ENCODE measurements at regions of chr9 and their contacts with region 1.

Region 1: GRCh38 chr9:5450359-5451091 is at the start of gene CD274:
- DNase-seq: peak; percentile 88
- ATAC-seq: peak; percentile 95
- H3K4me3 Mint-ChIP-seq: peak within 1 kb of the TSS; percentile 92
- H3K27ac Mint-ChIP-seq: peak within 1 kb of the TSS; percentile 95
- H3K4me1 Mint-ChIP-seq: peaks cover 56% of the 10 kb centered on the region
- H3K27me3 Mint-ChIP-seq: no peaks in the 10 kb centered on the region
- total RNA-seq, gene CD274: 6.8 to 9.8 TPM

Region 2: DNA sequence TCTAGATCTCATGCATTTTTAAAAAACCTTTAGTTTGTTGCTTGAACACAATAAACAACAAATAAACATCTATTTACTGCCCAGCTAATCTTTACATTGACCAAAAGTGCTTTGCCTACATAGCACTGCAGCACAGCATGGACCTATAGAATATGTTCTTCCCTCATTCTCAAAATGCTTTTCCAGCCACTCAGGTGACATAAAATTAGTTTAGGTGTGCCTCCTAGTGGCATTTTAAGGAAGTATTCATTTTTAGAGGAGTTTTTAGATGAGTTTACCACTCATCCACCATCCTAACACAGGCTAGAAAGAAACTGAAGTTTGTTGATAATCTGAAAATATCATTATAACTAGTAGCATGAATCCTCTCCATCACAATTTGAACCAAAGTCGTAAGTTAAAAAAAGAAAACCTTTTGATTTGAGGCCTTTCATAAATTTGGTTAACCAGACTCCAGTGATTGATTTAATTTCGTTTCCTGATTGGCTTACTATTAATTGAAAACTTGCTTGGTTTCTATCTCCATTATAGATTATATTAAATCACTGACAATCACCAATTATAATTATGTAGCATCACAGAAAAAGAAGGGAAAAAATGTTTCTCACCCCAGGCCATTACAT is 25.4 kb before region 1 on chr9:
- POLR2A ChIA-PET with region 1: no interaction called
- DNase-seq: no peak
- ATAC-seq: peak; percentile 58
- H3K4me3 Mint-ChIP-seq: no peak overlapping the region
- H3K27ac Mint-ChIP-seq: no peak overlapping the region
- H3K4me1 Mint-ChIP-seq: peaks cover 12% of the 10 kb centered on the region
- H3K27me3 Mint-ChIP-seq: no peaks in the 10 kb centered on the region

Region 3: GRCh38 chr9:5437254-5438216 is 13.0 kb before region 1 on chr9 and contains the start of gene PLGRKT:
- POLR2A ChIA-PET with region 1: interaction called, 29 read pairs
- DNase-seq: peak; percentile 88
- ATAC-seq: peak; percentile 98
- H3K4me3 Mint-ChIP-seq: peak within 1 kb of the TSS; percentile 94
- H3K27ac Mint-ChIP-seq: peak within 1 kb of the TSS; percentile 93
- H3K4me1 Mint-ChIP-seq: peaks cover 20% of the 10 kb centered on the region
- H3K27me3 Mint-ChIP-seq: no peaks in the 10 kb centered on the region
- total RNA-seq, gene PLGRKT: 25.5 to 27.0 TPM

Region 4: DNA sequence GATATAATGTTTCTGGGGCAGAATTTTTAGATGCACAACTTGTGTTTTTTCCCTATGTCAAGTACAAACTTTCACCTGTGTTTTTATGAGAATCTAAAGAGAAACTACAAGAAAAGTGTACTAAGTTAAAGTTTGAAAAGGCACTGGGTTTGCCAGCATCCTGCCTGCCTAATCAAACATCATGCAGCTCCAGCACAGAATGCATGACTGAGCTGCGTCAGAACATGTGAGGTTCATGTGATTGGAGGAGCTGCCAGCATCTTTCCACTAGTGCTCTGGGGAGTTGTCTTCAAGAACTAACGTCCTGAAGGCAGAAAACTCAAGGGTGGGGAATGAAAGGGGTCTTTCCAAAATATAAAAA is 132.3 kb after region 1 on chr9:
- POLR2A ChIA-PET with region 1: interaction called, 14 read pairs
- DNase-seq: no peak
- ATAC-seq: peak; percentile 74
- H3K4me3 Mint-ChIP-seq: no peak overlapping the region
- H3K27ac Mint-ChIP-seq: peak overlapping the region; percentile 10
- H3K4me1 Mint-ChIP-seq: peaks cover 18% of the 10 kb centered on the region
- H3K27me3 Mint-ChIP-seq: no peaks in the 10 kb centered on the region

Measured in activated naive CD8-positive, alpha-beta T cell treated with anti-CD3 and anti-CD28 coated beads, Interleukin-2, amount 10 ng/mL, durations not matched to agents 7 days and 5 days (primary cell).